ENCODE measurements at regions of chr19 and their contacts with region 1.

Region 1: DNA sequence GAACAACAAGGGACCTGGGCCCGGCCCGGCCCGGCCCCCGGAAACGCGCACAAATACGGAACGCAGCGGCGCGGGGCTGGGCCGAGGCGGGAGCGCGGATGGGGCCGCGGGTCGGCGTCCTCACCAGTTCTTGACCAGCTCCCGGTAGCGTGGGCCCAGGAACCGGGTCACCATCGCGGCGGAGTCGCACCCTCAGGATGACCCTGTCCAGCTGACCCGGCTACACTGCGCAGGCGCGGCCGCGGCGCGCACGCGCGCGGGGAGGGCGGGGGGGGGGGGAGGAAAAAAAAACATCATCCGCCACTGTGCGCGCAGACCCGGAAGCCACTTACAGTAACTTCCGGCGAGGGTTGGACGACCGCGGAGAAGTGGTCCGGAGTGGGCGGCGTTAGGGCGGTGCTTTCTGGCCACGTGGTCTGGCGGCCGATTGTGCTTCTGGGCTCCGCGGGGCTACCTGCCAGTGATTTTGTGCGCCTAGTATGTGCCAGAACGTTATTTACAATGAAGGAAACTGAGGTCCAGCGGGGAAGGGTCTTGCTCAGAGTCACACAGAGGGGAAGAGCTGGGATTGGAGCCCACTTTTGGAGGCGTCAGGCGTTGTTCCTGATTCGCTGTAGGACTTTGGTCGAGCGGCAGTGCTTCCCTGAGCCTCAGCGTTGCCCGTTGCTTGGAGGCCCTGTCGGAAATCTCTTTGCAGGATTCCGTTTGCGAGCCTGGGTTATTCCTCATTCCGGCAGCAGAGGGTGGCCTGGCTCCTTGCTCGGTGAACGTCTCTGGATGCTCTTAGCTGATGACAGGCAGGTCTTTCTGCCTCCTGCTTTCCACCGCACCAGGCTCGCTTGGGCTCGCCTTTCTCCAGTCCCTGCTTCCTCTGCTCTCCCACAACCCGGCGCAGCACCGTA is at the start of gene UQCR11:
- DNase-seq: peak; percentile 96
- H3K4me3 ChIP-seq: peak within 1 kb of the TSS; percentile 93 to 100
- H3K27ac ChIP-seq: peak within 1 kb of the TSS; percentile 85 to 90
- H3K4me1 ChIP-seq: peaks cover 15% of the 10 kb centered on the region
- H3K27me3 ChIP-seq: no peaks in the 10 kb centered on the region
- CTCF ChIP-seq: peak; percentile 14 to 71 (median 58)
- POLR2A ChIP-seq: peak; percentile 51
- total RNA-seq, gene UQCR11: 87.1 to 108 TPM

Region 2: DNA sequence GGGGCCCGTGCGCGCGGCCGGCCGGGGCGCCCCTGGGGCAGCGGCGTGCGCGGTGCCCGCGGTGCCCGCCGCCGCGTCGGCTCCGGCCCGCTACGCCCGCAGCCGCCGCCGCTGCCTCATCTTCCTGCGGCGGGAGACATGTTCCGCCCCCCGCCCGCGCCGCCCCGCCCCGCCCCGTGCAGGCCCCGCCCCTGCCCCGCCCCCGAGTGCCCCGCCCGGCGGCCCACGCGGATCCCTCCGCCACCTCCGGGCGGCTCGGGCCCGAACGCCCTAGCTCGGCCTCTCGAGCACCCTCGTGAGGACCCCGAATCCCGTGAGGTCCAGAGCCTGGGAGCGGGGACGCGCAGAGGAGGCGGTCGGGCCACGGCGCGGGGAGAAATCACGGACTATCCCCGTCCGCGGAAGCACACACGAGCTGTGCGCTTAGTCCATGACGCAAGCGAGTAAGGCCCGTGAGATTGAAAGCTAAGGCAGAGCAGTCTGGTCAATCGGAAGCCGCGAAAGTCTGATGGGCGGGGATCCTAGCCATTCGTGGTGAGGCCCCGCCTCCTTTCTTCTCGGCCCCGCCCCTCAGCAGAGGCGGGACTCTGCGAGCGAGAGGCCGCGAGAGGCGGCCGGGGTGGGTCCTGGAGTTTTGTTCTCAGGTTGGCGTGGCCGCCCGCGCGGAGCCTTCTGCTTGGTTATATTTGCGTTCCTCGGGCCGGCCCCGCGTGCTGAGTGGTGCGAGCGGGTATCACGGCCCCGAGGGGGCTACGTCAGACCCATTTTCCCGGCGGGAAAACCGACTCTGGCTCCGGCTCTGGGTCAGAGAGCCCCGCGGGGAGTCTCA is 47.2 kb after region 1 on chr19 and contains the start of gene TCF3:
- intact Hi-C with region 1: loop called (anchors 2 kb)
- DNase-seq: peak; percentile 97
- H3K4me3 ChIP-seq: peak within 1 kb of the TSS; percentile 87 to 92
- H3K27ac ChIP-seq: peak within 1 kb of the TSS; percentile 99 to 100
- H3K4me1 ChIP-seq: peaks cover 8% of the 10 kb centered on the region
- H3K27me3 ChIP-seq: no peaks in the 10 kb centered on the region
- CTCF ChIP-seq: peak in 2 of 4 experiments; percentile 11 to 18
- POLR2A ChIP-seq: peak; percentile 50
- total RNA-seq, gene TCF3: 91.5 to 332 TPM

Region 3: DNA sequence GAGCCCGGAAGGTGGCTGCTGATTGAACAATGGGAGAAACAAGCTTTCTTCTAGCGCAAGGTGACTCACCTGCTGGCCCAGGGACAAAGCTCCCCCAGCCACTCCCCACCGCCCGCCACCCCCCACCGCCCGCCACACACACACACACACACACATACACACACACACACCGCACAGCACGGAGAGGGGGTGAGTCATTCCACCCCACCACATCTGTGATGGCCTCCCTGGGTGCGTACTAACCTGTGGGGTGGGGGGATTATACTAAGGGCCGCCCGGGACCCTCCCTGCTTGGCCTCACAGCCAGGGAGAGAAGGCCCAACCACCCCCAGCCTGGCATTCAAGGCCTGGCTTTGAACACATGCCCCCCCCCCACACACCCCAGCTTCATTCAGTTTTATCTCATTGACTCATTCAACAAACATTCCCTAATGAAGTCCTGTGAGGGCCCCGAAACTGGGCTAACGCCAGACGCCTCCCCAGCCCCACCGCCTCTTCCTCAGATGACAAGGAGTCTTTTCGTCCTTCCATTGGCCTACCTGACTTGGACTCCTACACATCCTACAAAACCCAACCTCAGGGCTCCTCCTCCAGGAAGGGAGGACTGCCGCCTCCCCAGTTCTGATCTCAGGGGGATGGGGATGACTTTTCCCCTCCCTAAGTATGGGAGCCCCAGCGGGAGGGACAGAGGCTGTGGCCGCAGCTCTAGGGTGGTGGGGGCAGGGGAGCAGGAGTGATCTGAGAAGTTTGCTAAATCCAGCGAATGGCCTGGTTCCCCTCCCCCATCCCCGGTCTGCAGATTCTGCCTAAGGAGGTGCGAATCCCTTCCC is 142.0 kb after region 1 on chr19:
- intact Hi-C with region 1: no loop called
- DNase-seq: no peak
- H3K4me3 ChIP-seq: no peak overlapping the region
- H3K27ac ChIP-seq: no peak overlapping the region
- H3K4me1 ChIP-seq: peaks cover 3% of the 10 kb centered on the region
- H3K27me3 ChIP-seq: peaks cover 69% of the 10 kb centered on the region
- CTCF ChIP-seq: no peak
- POLR2A ChIP-seq: no peak